ENCODE measurements at regions of chr3 and their contacts with region 1.

Region 1: DNA sequence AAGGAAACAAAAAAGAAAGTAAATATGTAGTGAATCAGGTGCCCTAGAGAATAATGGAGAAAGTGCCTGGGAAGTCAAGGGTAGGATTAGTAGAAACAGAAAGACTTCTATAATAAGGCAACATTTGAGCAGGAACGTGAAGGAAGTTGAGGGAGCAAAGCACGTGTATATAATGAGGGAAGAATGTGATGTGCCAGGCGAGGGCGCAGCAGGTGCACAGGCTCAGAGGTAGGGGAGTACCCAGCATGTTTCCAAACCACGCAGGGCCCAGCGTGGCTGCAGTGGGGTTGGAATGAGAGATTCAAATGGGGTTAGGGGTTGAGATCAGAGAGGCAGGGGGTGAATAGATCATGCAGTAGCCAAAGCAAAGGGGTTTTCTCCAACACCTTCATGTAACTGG is 91.9 kb upstream of the VGLL4 start:
- DNase-seq: no peak
- H3K4me3 ChIP-seq: no peak overlapping the region
- H3K4me3 Mint-ChIP-seq: no peak overlapping the region
- H3K27ac Mint-ChIP-seq: no peak overlapping the region
- H3K4me1 ChIP-seq: no peaks in the 10 kb centered on the region
- H3K4me1 Mint-ChIP-seq: peaks cover 8% of the 10 kb centered on the region
- H3K27me3 ChIP-seq: no peaks in the 10 kb centered on the region
- H3K27me3 Mint-ChIP-seq: no peaks in the 10 kb centered on the region
- CTCF ChIP-seq: no peak

Region 2: GRCh38 chr3:11392014-11392859 is 343.4 kb before region 1 on chr3:
- CTCF ChIA-PET with region 1: no interaction called
- POLR2A ChIA-PET with region 1: no interaction called
- intact Hi-C with region 1: no loop called
- DNase-seq: no peak
- H3K4me3 ChIP-seq: no peak overlapping the region
- H3K4me3 Mint-ChIP-seq: no peak overlapping the region
- H3K27ac Mint-ChIP-seq: no peak overlapping the region
- H3K4me1 ChIP-seq: no peaks in the 10 kb centered on the region
- H3K4me1 Mint-ChIP-seq: peaks cover 13% of the 10 kb centered on the region
- H3K27me3 ChIP-seq: no peaks in the 10 kb centered on the region
- H3K27me3 Mint-ChIP-seq: no peaks in the 10 kb centered on the region
- CTCF ChIP-seq: no peak

Region 3: GRCh38 chr3:11651900-11652299 is 83.7 kb before region 1 on chr3:
- CTCF ChIA-PET with region 1: no interaction called
- POLR2A ChIA-PET with region 1: no interaction called
- intact Hi-C with region 1: no loop called
- DNase-seq: peak in 1 of 2 experiments; percentile 23
- H3K4me3 ChIP-seq: no peak overlapping the region
- H3K4me3 Mint-ChIP-seq: no peak overlapping the region
- H3K27ac Mint-ChIP-seq: no peak overlapping the region
- H3K4me1 ChIP-seq: peaks cover 11% of the 10 kb centered on the region
- H3K4me1 Mint-ChIP-seq: peaks cover 11% of the 10 kb centered on the region
- H3K27me3 ChIP-seq: no peaks in the 10 kb centered on the region
- H3K27me3 Mint-ChIP-seq: no peaks in the 10 kb centered on the region
- CTCF ChIP-seq: peak; percentile 24 to 46

Region 4: DNA sequence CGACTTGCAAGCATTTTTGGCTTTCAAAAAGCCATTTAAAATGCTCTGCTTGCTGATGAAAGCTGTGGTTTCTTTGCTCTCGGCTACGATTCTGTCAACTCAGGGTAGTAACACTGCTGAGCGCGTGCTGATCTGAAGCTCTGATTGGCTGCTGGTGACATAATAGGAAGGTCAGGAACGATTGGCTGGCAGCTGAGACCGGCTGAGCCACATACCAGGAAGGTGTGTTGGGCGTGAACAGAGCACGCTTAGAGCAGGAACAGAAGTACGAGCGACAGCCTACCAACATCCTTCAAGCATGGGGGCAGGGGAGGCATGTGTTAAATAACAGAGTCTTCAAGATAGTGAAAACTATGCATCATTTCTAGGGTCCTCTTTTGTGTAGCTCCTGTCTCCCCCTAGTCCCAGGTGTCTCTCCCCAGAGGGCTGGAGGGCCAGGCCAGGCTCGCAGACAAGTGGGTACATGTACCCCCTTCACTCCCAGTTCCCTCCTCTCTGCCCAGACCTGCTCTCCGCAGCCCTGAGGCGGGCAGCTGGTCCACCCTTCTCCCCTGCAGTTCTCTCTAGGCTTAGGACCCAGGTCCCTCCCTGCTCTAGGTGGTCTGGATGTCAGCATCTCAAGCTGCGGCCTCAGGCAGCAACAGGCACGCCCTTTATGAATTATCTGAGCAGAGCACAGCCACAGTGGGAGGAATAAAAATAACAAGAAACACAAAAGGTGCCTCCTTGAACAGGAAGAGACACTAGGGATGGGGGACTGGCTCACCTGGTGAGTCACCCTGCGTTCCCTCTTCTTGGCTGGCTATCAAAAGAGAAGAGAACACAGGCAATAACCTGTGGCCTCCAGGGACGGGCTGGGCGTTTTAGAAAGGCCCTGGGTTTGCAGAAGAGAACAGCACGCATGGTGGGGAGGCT is 35.1 kb after region 1 on chr3:
- CTCF ChIA-PET with region 1: no interaction called
- POLR2A ChIA-PET with region 1: no interaction called
- intact Hi-C with region 1: loop called (anchors 5 kb)
- DNase-seq: peak; percentile 89 to 94
- H3K4me3 ChIP-seq: peak overlapping the region; percentile 23
- H3K4me3 Mint-ChIP-seq: peak overlapping the region; percentile 81
- H3K27ac Mint-ChIP-seq: peak overlapping the region; percentile 94
- H3K4me1 ChIP-seq: peaks cover 7% of the 10 kb centered on the region
- H3K4me1 Mint-ChIP-seq: peaks cover 19% of the 10 kb centered on the region
- H3K27me3 ChIP-seq: no peaks in the 10 kb centered on the region
- H3K27me3 Mint-ChIP-seq: no peaks in the 10 kb centered on the region
- CTCF ChIP-seq: no peak

Measured in Caco-2 (cell line).